ENCODE measurements at regions of chr12 and their contacts with region 1.

Region 1: DNA sequence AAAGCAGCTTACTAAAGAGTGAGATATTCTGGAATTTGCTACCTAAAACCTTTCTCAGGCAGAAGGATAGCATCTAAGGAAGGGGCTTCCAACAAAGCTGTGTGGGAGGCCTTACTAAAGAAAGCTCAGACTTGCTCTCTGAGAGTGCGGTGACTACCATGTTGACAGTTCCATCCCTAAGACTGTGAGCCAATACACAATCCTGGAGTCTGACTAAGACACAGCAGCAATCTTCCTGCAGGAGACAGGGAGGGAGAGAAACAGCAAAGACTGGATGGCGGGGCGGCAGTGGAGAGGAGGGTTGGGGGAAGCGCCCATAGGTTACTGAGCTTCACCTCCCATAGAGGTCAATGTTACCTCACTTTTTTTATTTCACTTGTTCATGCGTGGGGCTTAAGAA is 70.9 kb downstream of the KITLG start:
- DNase-seq: peak; percentile 52
- ATAC-seq: no peak
- H3K4me3 ChIP-seq: no peak overlapping the region
- H3K27ac ChIP-seq: no peak overlapping the region
- H3K4me1 ChIP-seq: peaks cover 3% of the 10 kb centered on the region; the same call in 1 of the 2 replicates
- H3K27me3 ChIP-seq: no peaks in the 10 kb centered on the region
- CTCF ChIP-seq: no peak
- POLR2A ChIP-seq: no peak
- RAD21 ChIP-seq: no peak

Region 2: DNA sequence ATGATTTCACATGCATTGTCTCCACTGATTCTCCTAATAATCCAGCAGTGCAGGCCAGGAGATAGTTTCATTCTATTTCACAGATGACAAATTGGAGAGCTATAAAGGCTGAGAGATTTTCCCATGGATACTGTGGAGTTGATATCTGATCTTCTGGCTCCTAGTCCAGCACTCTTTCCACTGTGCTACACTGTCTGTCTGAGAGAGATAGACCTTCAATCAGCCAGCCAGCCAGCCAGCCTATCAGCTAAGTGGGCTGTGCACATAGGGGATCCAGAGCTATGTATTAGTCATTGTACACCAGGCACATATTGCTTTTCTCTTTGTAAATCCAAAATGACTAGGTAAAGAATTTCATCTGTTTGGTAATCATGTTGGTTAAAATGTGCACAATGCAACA is 1291.1 kb after region 1 on chr12:
- CTCF ChIA-PET with region 1: no interaction called
- POLR2A ChIA-PET with region 1: no interaction called
- dilution Hi-C with region 1: no loop called
- in situ Hi-C with region 1: no loop called
- intact Hi-C with region 1: loop called (anchors 5 kb)
- DNase-seq: no peak
- ATAC-seq: 0 out of 2 replicates have a peak, but pooled peaks have one; percentile 32
- H3K4me3 ChIP-seq: no peak overlapping the region
- H3K27ac ChIP-seq: no peak overlapping the region
- H3K4me1 ChIP-seq: no peaks in the 10 kb centered on the region
- H3K27me3 ChIP-seq: no peaks in the 10 kb centered on the region
- CTCF ChIP-seq: no peak
- POLR2A ChIP-seq: no peak
- RAD21 ChIP-seq: no peak

Measured in IMR-90 (cell line).